ENCODE measurements at regions of chr22 and their contacts with region 1.

Region 1: GRCh38 chr22:41532908-41533825 is 11.1 kb downstream of the POLR3H start:
- DNase-seq: peak; percentile 87
- ATAC-seq: peak; percentile 79
- H3K4me3 Mint-ChIP-seq: no peak overlapping the region
- H3K27ac Mint-ChIP-seq: peak overlapping the region; percentile 82
- H3K4me1 Mint-ChIP-seq: peaks cover 11% of the 10 kb centered on the region
- H3K27me3 Mint-ChIP-seq: no peaks in the 10 kb centered on the region
- CTCF ChIP-seq: peak; percentile 74

Region 2: DNA sequence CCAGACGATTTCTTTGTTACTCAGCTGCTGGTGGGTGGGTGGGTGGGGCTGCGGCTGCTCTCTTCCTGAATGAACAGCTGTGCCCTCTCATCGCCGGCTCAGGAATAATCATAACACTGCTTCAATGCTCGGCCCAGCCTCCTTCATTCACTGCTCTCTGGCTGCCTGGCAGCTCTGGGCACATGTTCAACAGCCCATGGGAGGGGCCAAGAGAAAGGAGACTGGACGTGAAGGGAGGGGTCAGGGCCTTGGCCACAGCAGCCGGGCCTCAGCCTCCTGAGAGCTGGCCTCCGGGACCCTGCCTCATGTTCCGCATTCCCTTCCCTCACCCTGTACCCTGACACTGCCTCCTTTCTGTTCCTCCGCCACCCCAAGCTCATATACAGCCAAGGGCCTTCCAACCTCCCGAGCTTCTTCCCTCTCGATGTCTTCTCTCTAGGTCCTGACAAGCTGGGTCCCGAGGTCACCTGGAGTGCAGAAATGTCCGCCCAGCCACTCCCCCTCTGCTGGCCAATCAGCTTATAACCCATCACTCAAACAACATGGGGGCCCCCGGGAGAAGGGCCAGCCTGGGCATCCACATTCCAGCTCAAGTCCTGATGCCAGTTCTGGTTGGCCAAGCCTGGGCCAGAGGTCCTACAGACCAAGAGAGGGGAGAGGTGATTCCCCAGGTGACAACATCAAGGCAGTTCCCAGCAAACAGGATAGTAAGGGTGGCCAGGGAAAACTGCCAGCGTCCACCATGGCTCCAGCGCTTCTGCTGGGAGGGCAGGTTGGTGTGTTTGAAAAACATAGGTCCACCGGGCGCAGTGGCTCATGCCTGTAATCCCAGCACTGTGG is 24.5 kb after region 1 on chr22:
- CTCF ChIA-PET with region 1: interaction called, 12 read pairs
- POLR2A ChIA-PET with region 1: interaction called, 4 read pairs
- DNase-seq: peak; percentile 39
- ATAC-seq: peak; percentile 16; the same call in 1 of the 2 replicates
- H3K4me3 Mint-ChIP-seq: no peak overlapping the region
- H3K27ac Mint-ChIP-seq: no peak overlapping the region; the same call in 1 of the 2 replicates
- H3K4me1 Mint-ChIP-seq: peaks cover 37% of the 10 kb centered on the region
- H3K27me3 Mint-ChIP-seq: no peaks in the 10 kb centered on the region
- CTCF ChIP-seq: no peak